ENCODE measurements at regions of chr7 and their contacts with region 1.

Region 1: GRCh38 chr7:134632937-134633540 is 13.6 kb upstream of the BPGM start:
- DNase-seq: peak; percentile 64
- ATAC-seq: peak; percentile 69
- H3K4me3 ChIP-seq: no peak overlapping the region
- H3K27ac ChIP-seq: no peak overlapping the region
- H3K4me1 ChIP-seq: no peaks in the 10 kb centered on the region
- H3K27me3 ChIP-seq: no peaks in the 10 kb centered on the region
- CTCF ChIP-seq: peak; percentile 84

Region 2: GRCh38 chr7:134605973-134606923 is 26.8 kb before region 1 on chr7:
- CTCF ChIA-PET with region 1: no interaction called
- POLR2A ChIA-PET with region 1: no interaction called
- intact Hi-C with region 1: no loop called
- DNase-seq: peak; percentile 78
- ATAC-seq: peak; percentile 96
- H3K4me3 ChIP-seq: peak overlapping the region; percentile 24; the same call in 1 of the 2 replicates
- H3K27ac ChIP-seq: peak overlapping the region; percentile 56
- H3K4me1 ChIP-seq: peaks cover 11% of the 10 kb centered on the region
- H3K27me3 ChIP-seq: no peaks in the 10 kb centered on the region
- CTCF ChIP-seq: peak; percentile 96

Region 3: GRCh38 chr7:134690016-134690415 is 57.0 kb after region 1 on chr7:
- CTCF ChIA-PET with region 1: interaction called, 6 read pairs
- POLR2A ChIA-PET with region 1: no interaction called
- intact Hi-C with region 1: loop called (anchors 5 kb)
- DNase-seq: peak; percentile 15
- ATAC-seq: peak; percentile 51; the same call in 1 of the 2 replicates
- H3K4me3 ChIP-seq: no peak overlapping the region
- H3K27ac ChIP-seq: no peak overlapping the region
- H3K4me1 ChIP-seq: 0 out of 2 replicates have a peak, but pooled peaks cover 11% of the 10 kb centered on the region
- H3K27me3 ChIP-seq: no peaks in the 10 kb centered on the region
- CTCF ChIP-seq: peak; percentile 42; the same call in 1 of the 2 replicates

Region 4: DNA sequence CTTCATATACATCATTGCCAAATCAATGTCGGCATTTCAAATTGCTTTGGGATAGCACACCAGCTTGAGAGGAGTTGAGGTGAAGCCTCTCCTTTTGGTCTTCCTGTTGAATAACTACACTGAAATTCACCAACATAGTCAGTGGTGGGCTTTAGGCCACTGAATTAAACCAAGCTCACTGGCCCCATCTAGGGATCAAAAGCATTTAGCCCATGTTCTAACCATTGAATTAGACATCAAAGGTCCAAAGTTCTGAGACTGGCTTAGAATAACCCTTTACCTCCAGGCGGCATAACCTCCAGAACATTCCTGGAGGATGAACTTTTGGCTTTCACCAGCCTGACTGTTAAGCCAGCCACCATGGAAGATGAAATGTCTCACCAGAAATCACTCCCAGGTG is 68.2 kb after region 1 on chr7:
- CTCF ChIA-PET with region 1: interaction called, 3 read pairs
- POLR2A ChIA-PET with region 1: no interaction called
- intact Hi-C with region 1: loop called (anchors 1 kb)
- DNase-seq: peak; percentile 62
- ATAC-seq: peak; percentile 80
- H3K4me3 ChIP-seq: no peak overlapping the region
- H3K27ac ChIP-seq: no peak overlapping the region
- H3K4me1 ChIP-seq: no peaks in the 10 kb centered on the region
- H3K27me3 ChIP-seq: no peaks in the 10 kb centered on the region
- CTCF ChIP-seq: peak; percentile 73